ENCODE measurements at regions of chr12 and their contacts with region 1.

Region 1: GRCh38 chr12:98593351-98594049 is at the start of gene SLC25A3:
- DNase-seq: peak; percentile 99
- ATAC-seq: peak; percentile 97
- H3K4me3 ChIP-seq: peak within 1 kb of the TSS; percentile 91 to 100 (median 96)
- H3K4me3 Mint-ChIP-seq: peak within 1 kb of the TSS; percentile 91
- H3K27ac ChIP-seq: peak within 1 kb of the TSS; percentile 96 to 98
- H3K27ac Mint-ChIP-seq: peak within 1 kb of the TSS; percentile 98
- H3K4me1 ChIP-seq: peaks cover 20 to 25% of the 10 kb centered on the region in 2 donors
- H3K4me1 Mint-ChIP-seq: peaks cover 34% of the 10 kb centered on the region
- H3K27me3 ChIP-seq: no peaks in the 10 kb centered on the region
- H3K27me3 Mint-ChIP-seq: no peaks in the 10 kb centered on the region
- CTCF ChIP-seq: no peak
- total RNA-seq, gene SLC25A3: 304 and 308 TPM in 2 replicates

Region 2: DNA sequence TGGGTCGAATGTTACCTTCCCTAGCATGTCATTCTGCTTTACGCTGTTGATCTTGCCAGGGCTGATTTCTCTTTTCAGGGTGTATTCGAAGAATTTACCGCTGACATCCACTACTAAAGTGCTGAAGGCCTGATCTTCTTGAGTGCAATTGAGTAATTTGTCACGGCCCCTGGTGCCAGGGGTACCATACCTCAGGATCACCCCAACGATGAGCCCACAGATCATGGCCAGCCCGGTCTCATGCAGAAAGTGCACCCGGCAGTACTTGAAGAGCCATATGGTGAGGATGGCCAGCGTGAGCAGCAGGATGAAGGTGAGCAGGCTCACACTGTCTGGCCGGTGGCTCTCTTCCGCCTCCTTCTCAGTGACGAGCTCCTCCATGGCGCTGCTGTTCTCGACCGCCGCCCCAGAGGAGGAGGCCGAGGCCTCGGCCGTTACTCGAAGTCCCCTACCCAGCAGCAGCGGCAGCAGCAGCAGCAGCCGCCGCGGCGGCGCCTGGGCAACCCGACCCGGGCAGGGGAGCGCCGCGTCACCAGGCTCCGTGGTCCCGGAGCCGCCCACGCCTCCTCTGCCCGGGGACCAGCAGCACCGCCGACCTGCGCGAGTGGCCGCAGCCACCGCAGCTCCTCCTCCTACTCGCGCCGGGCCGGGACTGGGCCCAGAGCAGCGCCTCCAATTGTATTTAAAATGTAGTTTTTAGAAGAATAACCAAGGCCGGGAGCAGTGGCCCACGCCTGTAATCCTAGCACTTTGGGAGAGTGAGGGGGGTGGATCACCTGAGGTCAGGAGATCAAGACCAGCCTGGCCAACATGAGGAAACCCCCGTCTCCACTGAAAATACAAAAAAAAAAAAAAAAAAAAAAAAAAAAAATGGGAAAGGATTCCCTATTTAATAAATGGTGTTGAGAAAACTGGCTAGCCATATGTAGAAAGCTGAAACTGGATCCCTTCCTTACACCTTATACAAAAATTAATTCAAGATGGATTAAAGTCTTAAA is 136.6 kb before region 1 on chr12:
- CTCF ChIA-PET with region 1: no interaction called
- POLR2A ChIA-PET with region 1: no interaction called
- intact Hi-C with region 1: no loop called
- DNase-seq: peak; percentile 37
- ATAC-seq: no peak
- H3K4me3 ChIP-seq: peak overlapping the region in 1 of 5 experiments; percentile 22
- H3K4me3 Mint-ChIP-seq: peak overlapping the region; percentile 67
- H3K27ac ChIP-seq: no peak overlapping the region
- H3K27ac Mint-ChIP-seq: no peak overlapping the region
- H3K4me1 ChIP-seq: peaks cover 5 to 7% of the 10 kb centered on the region in 2 donors
- H3K4me1 Mint-ChIP-seq: peaks cover 8% of the 10 kb centered on the region
- H3K27me3 ChIP-seq: peaks cover 0 to 27% (median 12%) of the 10 kb centered on the region in 4 experiments
- H3K27me3 Mint-ChIP-seq: peaks cover 33% of the 10 kb centered on the region
- CTCF ChIP-seq: no peak

Region 3: GRCh38 chr12:98503592-98504367 is 89.7 kb before region 1 on chr12:
- CTCF ChIA-PET with region 1: no interaction called
- POLR2A ChIA-PET with region 1: interaction called, 3 read pairs
- intact Hi-C with region 1: loop called (anchors 2 kb)
- DNase-seq: peak; percentile 98
- ATAC-seq: peak; percentile 88
- H3K4me3 ChIP-seq: peak overlapping the region; percentile 75 to 96 (median 95)
- H3K4me3 Mint-ChIP-seq: peak overlapping the region; percentile 100
- H3K27ac ChIP-seq: peak overlapping the region; percentile 98 to 99
- H3K27ac Mint-ChIP-seq: peak overlapping the region; percentile 100
- H3K4me1 ChIP-seq: peaks cover 4 to 13% of the 10 kb centered on the region in 2 donors
- H3K4me1 Mint-ChIP-seq: peaks cover 23% of the 10 kb centered on the region
- H3K27me3 ChIP-seq: no peaks in the 10 kb centered on the region
- H3K27me3 Mint-ChIP-seq: peaks cover 3% of the 10 kb centered on the region
- CTCF ChIP-seq: no peak

Region 4: DNA sequence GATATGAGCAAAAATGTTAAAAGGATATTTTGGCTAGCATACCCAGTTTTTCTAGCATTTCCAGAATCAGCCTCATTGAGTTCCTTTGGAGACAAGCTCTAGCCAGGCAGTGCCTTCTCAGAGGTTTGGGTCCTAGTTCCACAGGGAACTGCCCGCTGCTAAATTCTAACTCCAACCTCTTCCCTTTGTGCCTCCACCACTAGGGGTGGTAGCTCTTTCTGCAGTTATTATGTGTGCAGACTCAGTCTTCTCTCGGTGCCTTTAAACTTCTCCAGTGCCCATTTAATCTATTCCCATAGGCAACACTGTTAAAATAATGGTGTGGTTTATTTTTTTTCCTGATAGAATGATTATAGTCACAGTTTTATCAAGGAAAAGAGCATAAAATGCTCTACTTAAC is 21.5 kb before region 1 on chr12:
- CTCF ChIA-PET with region 1: interaction called, 31 read pairs
- POLR2A ChIA-PET with region 1: interaction called, 4 read pairs
- intact Hi-C with region 1: no loop called
- DNase-seq: no peak
- ATAC-seq: no peak
- H3K4me3 ChIP-seq: no peak overlapping the region
- H3K4me3 Mint-ChIP-seq: no peak overlapping the region
- H3K27ac ChIP-seq: no peak overlapping the region
- H3K27ac Mint-ChIP-seq: no peak overlapping the region
- H3K4me1 ChIP-seq: no peaks in the 10 kb centered on the region
- H3K4me1 Mint-ChIP-seq: no peaks in the 10 kb centered on the region
- H3K27me3 ChIP-seq: no peaks in the 10 kb centered on the region
- H3K27me3 Mint-ChIP-seq: peaks cover 3% of the 10 kb centered on the region
- CTCF ChIP-seq: peak; percentile 12

Region 5: DNA sequence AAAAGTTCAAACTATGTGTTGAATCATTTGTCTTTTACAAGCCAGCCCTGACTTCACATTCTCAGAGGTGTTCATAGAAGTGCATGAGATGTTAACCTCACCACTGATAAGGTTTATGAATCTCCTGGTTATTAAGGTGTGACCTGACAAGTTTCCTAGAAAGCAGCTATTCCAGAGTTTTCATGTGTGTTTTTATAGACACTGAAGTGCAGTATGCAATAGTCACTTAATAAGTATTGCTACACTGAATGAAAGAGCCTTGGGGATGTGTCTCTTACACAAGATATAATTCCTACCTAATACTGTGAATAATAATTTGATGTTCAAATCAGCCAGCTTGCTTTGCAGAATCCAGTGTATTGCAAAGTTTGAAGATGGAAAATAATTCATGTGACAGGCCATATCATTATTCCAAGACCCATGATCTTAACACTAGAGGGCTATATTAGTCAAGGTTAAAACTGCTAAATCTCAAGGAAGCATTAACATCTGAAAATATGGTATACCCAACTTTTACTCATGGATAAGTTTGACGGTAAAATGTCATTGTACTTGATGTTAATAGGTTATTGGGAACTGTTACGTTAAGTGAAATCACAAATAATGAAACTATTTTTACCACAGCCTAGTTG is 13.0 kb after region 1 on chr12:
- CTCF ChIA-PET with region 1: interaction called, 14 read pairs
- POLR2A ChIA-PET with region 1: interaction called, 5 read pairs
- intact Hi-C with region 1: no loop called
- DNase-seq: no peak
- ATAC-seq: no peak
- H3K4me3 ChIP-seq: no peak overlapping the region
- H3K4me3 Mint-ChIP-seq: peak overlapping the region; percentile 91
- H3K27ac ChIP-seq: peak overlapping the region in 1 of 2 donors; percentile 71
- H3K27ac Mint-ChIP-seq: no peak overlapping the region
- H3K4me1 ChIP-seq: peaks cover 4 to 12% of the 10 kb centered on the region in 2 donors
- H3K4me1 Mint-ChIP-seq: peaks cover 16% of the 10 kb centered on the region
- H3K27me3 ChIP-seq: no peaks in the 10 kb centered on the region
- H3K27me3 Mint-ChIP-seq: no peaks in the 10 kb centered on the region
- CTCF ChIP-seq: no peak

Region 6: GRCh38 chr12:98612696-98613334 is 19.3 kb after region 1 on chr12:
- CTCF ChIA-PET with region 1: interaction called, 14 read pairs
- POLR2A ChIA-PET with region 1: interaction called, 6 read pairs
- intact Hi-C with region 1: loop called (anchors 1 kb)
- DNase-seq: peak; percentile 86
- ATAC-seq: peak; percentile 93
- H3K4me3 ChIP-seq: peak overlapping the region in 1 of 5 experiments; percentile 15
- H3K4me3 Mint-ChIP-seq: peak overlapping the region; percentile 62
- H3K27ac ChIP-seq: peak overlapping the region; percentile 63 to 67
- H3K27ac Mint-ChIP-seq: peak overlapping the region; percentile 95
- H3K4me1 ChIP-seq: peaks cover 14 to 16% of the 10 kb centered on the region in 2 donors
- H3K4me1 Mint-ChIP-seq: peaks cover 24% of the 10 kb centered on the region
- H3K27me3 ChIP-seq: no peaks in the 10 kb centered on the region
- H3K27me3 Mint-ChIP-seq: no peaks in the 10 kb centered on the region
- CTCF ChIP-seq: no peak

Region 7: GRCh38 chr12:98686603-98687002 is 93.1 kb after region 1 on chr12:
- CTCF ChIA-PET with region 1: no interaction called
- POLR2A ChIA-PET with region 1: no interaction called
- intact Hi-C with region 1: no loop called
- DNase-seq: no peak
- ATAC-seq: no peak
- H3K4me3 ChIP-seq: no peak overlapping the region
- H3K4me3 Mint-ChIP-seq: no peak overlapping the region
- H3K27ac ChIP-seq: no peak overlapping the region
- H3K27ac Mint-ChIP-seq: no peak overlapping the region
- H3K4me1 ChIP-seq: no peaks in the 10 kb centered on the region
- H3K4me1 Mint-ChIP-seq: no peaks in the 10 kb centered on the region
- H3K27me3 ChIP-seq: no peaks in the 10 kb centered on the region
- H3K27me3 Mint-ChIP-seq: no peaks in the 10 kb centered on the region
- CTCF ChIP-seq: no peak

Measured in B cell (primary cell).